ENCODE measurements at regions of chr1 and their contacts with region 1.

Region 1: DNA sequence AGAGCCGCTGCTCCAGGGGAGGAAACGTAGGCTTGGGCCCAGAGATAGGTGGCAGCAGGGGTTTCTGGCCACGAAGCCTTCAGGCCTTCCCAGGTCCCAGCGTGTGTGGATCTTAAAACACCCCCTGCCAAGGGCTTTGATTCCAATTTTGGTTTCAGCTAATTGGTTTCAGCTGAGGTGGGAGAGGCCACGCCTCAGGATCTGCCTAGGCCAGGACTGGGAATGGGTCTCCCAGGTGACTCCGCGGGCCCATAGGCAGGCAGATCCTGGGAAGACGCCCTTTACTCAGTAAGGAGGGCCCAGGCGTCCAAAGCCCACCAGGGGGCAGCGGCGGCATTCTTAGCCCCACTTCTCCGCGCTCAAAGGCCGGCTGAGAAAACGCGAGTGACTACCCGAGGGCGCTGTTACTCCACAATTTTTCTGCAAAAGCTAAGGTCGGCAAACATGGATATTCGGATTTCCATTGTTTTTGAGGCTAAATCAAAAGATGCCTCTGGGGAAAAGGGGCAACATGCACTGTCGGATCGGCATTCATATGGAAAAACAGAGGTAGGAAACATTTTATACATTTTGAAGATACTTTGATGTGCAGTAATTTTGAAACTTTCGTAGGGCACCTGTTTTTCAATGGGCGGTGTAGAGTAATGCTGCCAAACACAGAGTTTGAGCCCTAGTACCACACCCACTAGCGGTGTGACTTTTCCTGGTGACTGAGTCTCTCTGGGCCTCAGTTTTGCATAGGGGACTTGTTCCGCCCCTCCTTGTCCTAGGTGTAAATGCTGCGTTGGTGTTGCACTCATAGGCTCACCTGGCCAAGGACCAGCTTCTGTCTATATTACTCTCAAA is 31.8 kb upstream of the BCL10 start:
- DNase-seq: peak; percentile 83
- H3K4me3 ChIP-seq: peak overlapping the region in 1 of 2 experiments; percentile 10; a peak in 1 of 4 replicates
- H3K27ac ChIP-seq: peak overlapping the region in 1 of 2 experiments; percentile 28; a peak in 3 of 4 replicates
- H3K4me1 ChIP-seq: peaks cover 6 to 7% of the 10 kb centered on the region in 2 experiments; a peak in 2 of 4 replicates
- H3K27me3 ChIP-seq: no peaks in the 10 kb centered on the region
- CTCF ChIP-seq: peak; percentile 99
- EP300 ChIP-seq: peak in 1 of 2 experiments; percentile 26; a peak in 1 of 4 replicates
- RAD21 ChIP-seq: peak; percentile 100

Region 2: DNA sequence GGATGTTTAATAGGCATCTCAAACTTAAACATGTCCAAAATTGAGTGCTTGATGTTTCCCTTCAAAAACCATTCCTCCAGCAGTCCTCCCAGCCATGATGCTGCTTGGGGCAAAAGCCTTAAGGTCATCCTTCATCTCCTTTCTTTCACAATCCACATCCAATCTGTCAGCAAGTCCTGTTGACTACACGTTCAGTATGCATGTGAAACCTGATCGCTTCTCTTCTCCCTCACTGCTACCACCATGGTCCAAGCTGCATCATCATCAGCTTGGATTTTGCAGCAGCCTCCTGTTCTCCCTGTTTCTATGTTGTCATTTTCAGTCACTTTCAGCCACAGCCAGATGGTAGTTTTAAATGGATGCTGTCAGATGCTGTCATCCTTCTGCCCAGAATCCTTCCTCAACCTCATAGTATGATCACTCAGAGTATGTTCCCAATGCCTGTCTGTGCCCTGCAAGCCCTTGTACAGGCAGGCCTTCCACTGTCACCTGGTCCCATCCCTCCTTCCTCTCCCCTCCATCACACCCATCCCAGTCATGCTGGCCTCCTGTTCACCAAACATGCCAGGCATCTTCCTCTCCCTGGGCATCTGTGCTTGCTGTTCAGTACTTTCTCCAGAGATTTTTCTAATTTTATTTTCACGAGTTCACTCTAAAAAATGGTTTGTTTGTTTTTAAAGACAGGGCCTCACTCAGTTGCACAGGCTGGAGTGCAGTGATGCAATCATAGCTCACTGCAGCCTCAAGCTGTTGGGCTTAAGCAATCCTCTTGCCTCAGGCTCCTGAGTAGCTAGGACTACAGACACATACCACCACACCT is 173.4 kb before region 1 on chr1:
- CTCF ChIA-PET with region 1: no interaction called
- POLR2A ChIA-PET with region 1: no interaction called
- DNase-seq: no peak
- H3K4me3 ChIP-seq: no peak overlapping the region
- H3K27ac ChIP-seq: no peak overlapping the region
- H3K4me1 ChIP-seq: no peaks in the 10 kb centered on the region; a peak in 1 of 4 replicates
- H3K27me3 ChIP-seq: peaks cover 4% of the 10 kb centered on the region; the same call in 1 of the 2 replicates
- CTCF ChIP-seq: no peak
- EP300 ChIP-seq: no peak
- RAD21 ChIP-seq: no peak

Region 3: GRCh38 chr1:85330711-85331290 is 22.6 kb after region 1 on chr1:
- CTCF ChIA-PET with region 1: interaction called, 15 read pairs
- POLR2A ChIA-PET with region 1: no interaction called
- DNase-seq: no peak
- H3K4me3 ChIP-seq: peak overlapping the region in 1 of 2 experiments; percentile 9; a peak in 1 of 4 replicates
- H3K27ac ChIP-seq: peak overlapping the region; percentile 90 to 100
- H3K4me1 ChIP-seq: peaks cover 25 to 58% of the 10 kb centered on the region in 2 experiments
- H3K27me3 ChIP-seq: no peaks in the 10 kb centered on the region
- CTCF ChIP-seq: peak; percentile 17; the same call in 1 of the 2 replicates
- EP300 ChIP-seq: peak; percentile 49 to 97
- RAD21 ChIP-seq: no peak

Region 4: GRCh38 chr1:85464497-85465098 is 156.4 kb after region 1 on chr1:
- CTCF ChIA-PET with region 1: interaction called, 69 read pairs
- POLR2A ChIA-PET with region 1: no interaction called
- DNase-seq: peak; percentile 81
- H3K4me3 ChIP-seq: peak overlapping the region; percentile 80
- H3K27ac ChIP-seq: peak overlapping the region; percentile 88 to 96
- H3K4me1 ChIP-seq: peaks cover 22 to 36% of the 10 kb centered on the region in 2 experiments; a peak in 3 of 4 replicates
- H3K27me3 ChIP-seq: no peaks in the 10 kb centered on the region
- CTCF ChIP-seq: no peak; the same call in 1 of the 2 replicates
- EP300 ChIP-seq: no peak
- RAD21 ChIP-seq: no peak; the same call in 1 of the 2 replicates

Region 5: DNA sequence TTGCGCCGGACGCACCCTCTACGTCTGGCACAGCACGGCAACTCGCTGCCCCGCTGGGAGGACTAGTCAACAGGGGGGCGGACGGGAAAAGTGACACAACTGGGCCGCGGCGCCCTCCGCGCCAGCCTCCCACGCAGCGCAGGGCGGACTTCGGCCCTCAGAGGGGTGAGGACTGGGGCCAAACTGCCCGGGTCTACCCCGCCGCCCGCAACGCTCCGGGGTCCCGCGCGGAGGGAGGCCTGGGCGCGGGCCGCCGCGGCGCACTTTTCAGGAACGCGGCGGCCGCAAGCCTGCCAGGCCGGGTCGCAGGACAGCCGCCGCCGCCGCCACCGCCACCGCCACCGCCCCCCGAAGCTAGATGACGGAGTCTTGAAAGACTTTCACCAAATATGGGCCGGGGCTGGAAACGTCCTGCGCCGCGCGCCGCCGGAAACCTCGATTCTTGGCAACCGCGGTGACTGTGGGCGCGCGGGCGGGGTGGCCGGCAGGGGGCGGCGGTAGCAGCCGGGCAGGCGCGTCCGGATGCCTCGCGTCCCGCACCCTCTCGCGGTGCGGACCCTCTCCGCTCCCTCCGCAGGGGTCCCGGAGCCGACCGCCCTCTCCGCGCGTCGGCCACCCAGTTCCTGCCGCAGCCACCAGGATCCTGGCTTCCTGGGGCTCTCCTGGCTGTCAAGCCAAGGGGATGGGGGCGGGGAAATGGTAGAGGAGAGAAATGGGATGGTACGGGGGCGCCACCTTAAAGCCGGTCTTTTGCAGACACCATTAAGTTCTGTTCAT is 268.6 kb after region 1 on chr1:
- CTCF ChIA-PET with region 1: interaction called, 56 read pairs
- POLR2A ChIA-PET with region 1: no interaction called
- DNase-seq: peak; percentile 90
- H3K4me3 ChIP-seq: peak overlapping the region; percentile 78 to 84
- H3K27ac ChIP-seq: peak overlapping the region; percentile 93 to 98
- H3K4me1 ChIP-seq: peaks cover 23 to 33% of the 10 kb centered on the region in 2 experiments
- H3K27me3 ChIP-seq: no peaks in the 10 kb centered on the region
- CTCF ChIP-seq: peak; percentile 67
- EP300 ChIP-seq: no peak
- RAD21 ChIP-seq: peak; percentile 27; the same call in 1 of the 2 replicates

Region 6: DNA sequence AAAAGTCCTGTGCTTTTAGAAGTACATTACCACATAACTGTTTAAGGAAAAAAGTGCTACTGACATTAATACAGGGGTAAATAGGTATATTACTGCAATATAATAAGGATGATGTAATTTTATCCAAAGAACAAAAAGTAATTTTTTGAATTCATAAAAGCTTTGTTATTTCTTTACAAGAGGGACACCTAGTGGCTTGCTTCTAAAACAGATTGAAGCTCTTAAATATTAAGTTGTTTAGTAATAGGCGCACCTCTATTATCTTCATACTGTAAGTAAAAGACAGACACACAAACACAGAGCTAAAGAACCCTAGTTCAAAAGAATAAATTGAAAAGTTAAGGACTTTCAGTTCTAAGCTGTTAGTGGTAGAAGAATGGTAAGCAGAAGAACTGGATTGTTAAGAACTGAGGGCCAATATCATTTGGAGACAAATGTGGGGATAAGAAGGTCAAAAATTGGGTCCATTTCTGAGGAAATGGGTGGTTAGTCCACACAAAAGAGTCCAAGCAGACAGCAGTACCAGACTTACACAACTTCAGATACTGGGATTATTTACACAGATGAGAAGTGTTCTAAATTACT is 384.6 kb after region 1 on chr1:
- CTCF ChIA-PET with region 1: interaction called, 78 read pairs
- POLR2A ChIA-PET with region 1: interaction called, 4 read pairs
- DNase-seq: no peak
- H3K4me3 ChIP-seq: no peak overlapping the region
- H3K27ac ChIP-seq: peak overlapping the region in 1 of 2 experiments; percentile 35; a peak in 1 of 4 replicates
- H3K4me1 ChIP-seq: peaks cover 6% of the 10 kb centered on the region in 2 experiments; a peak in 2 of 4 replicates
- H3K27me3 ChIP-seq: no peaks in the 10 kb centered on the region
- CTCF ChIP-seq: peak; percentile 80
- EP300 ChIP-seq: no peak
- RAD21 ChIP-seq: peak; percentile 62

Region 7: GRCh38 chr1:86018283-86018923 is 710.2 kb after region 1 on chr1:
- CTCF ChIA-PET with region 1: interaction called, 22 read pairs
- POLR2A ChIA-PET with region 1: no interaction called
- DNase-seq: peak; percentile 31
- H3K4me3 ChIP-seq: no peak overlapping the region
- H3K27ac ChIP-seq: no peak overlapping the region
- H3K4me1 ChIP-seq: no peaks in the 10 kb centered on the region
- H3K27me3 ChIP-seq: no peaks in the 10 kb centered on the region
- CTCF ChIP-seq: peak; percentile 92
- EP300 ChIP-seq: no peak
- RAD21 ChIP-seq: peak; percentile 76

Measured in SK-N-SH (cell line).